Endothelial cell of umbilical vein (primary cell): ENCODE measurements at regions of chr10 and their contacts with region 1.

Region 1: DNA sequence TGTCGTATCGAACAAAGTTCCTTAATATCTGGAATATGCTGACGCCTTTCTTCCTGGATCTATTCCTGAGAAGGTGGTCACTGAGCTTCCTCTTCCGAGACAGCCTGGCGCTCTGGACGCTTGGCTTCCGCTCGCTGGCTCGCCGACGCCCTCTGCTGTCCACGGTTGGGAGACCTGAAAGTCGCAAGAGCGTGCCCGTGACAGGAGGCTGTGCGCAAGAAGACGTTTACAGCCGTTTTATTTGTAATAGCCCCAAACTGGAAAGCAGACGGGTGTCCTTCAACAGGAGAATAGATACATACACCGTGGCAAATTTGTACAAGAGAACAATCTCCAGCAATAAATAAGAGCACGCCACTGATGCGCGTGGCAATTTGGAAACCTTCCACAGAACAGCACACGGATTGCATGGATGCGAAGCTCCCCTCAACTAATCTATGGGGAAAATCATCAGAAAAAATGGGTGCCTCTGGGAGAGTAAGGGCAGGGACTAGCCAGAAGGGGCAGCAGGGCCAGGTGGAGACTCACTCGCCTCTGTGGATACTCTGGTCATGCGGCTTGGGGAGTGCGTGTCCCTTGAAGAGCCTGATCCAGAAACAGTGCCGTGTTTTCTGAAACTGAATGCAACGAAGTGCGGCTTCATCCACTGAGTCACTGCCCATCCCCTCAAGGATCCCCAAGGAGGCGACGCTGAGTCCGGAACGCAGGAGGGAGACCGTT is 41.5 kb upstream of the BNIP3 start:
- DNase-seq: peak; percentile 79
- H3K4me3 ChIP-seq: peak overlapping the region in 1 of 3 experiments; percentile 3
- H3K27ac ChIP-seq: no peak overlapping the region
- H3K4me1 ChIP-seq: no peaks in the 10 kb centered on the region
- H3K27me3 ChIP-seq: peaks cover 2 to 6% of the 10 kb centered on the region in 2 experiments
- CTCF ChIP-seq: peak; percentile 87
- POLR2A ChIP-seq: no peak

Region 2: DNA sequence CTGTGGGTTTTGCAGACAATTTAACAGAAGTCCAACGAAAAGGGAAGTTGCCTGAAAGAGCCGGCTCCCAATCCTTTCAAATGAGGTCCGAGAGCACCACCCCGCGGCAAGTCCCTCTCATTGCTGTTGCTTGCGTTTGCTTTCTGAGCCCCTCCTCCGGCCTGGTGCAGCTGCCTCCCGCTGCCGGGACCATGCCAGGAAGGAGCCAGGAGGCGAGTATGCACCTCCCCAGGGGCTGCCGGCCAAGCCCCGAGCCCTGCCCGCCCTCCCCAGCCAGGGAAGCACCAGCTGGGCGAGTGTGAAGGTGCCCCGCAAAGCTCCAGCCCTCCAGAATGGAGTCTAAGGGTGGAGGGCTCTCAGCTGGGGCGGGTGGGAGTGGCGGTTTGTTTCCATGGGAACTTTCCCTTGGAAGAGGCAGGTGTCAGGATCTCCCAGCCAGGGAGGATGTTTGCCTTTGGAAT is 148.2 kb before region 1 on chr10:
- CTCF ChIA-PET with region 1: interaction called, 16 read pairs
- POLR2A ChIA-PET with region 1: no interaction called
- dilution Hi-C with region 1: no loop called
- intact Hi-C with region 1: no loop called
- DNase-seq: peak; percentile 74
- H3K4me3 ChIP-seq: no peak overlapping the region
- H3K27ac ChIP-seq: no peak overlapping the region
- H3K4me1 ChIP-seq: no peaks in the 10 kb centered on the region
- H3K27me3 ChIP-seq: no peaks in the 10 kb centered on the region
- CTCF ChIP-seq: peak; percentile 72 to 85
- POLR2A ChIP-seq: no peak

Region 3: DNA sequence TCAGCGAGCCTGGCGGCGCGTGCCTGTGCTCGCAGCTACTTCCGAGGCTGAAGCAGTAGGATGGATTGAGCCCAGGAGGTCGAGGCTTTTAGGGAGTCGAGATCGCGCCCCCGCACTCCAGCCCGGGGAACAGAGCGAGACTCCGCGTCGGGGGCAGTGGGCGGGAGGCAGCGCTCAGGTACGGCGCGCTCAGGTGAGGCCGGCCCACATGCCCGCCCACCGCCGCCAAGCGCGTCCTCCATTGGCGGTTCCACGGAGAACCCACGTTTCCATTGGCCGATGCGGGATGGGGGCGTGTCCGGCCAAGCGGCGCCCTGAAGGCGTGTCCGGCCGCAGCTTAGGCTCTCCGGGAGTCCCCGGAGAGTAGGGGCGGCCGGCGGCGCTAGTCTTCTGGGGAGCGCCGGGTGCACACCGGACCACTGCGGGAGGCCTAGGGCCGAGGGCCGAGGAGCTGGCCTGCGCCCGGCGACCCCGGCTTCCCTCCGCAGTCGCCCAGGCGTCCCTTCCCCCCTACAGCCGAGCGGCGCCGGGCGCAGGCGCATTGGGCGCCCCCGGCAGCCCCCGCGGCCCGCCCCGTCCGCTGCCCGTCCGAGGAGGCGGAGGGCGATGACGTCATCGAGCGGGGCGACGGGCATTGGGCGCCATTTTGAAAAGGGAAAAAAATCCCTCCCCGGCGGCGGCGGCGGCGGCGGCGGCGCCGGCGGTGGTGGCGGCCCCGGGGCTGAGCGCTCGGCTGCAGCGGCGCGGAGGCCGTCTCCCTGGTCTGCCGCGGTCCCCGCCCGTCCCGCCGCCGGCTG is 122.7 kb before region 1 on chr10 and contains the start of gene PPP2R2D:
- CTCF ChIA-PET with region 1: interaction called, 64 read pairs
- POLR2A ChIA-PET with region 1: no interaction called
- dilution Hi-C with region 1: no loop called
- intact Hi-C with region 1: loop called (anchors 1 kb)
- DNase-seq: peak; percentile 90
- H3K4me3 ChIP-seq: peak within 1 kb of the TSS; percentile 87 to 95 (median 93)
- H3K27ac ChIP-seq: peak within 1 kb of the TSS; percentile 72
- H3K4me1 ChIP-seq: peaks cover 23% of the 10 kb centered on the region
- H3K27me3 ChIP-seq: peaks cover 12 to 18% of the 10 kb centered on the region in 2 experiments
- CTCF ChIP-seq: no peak
- POLR2A ChIP-seq: peak; percentile 45
- total RNA-seq, gene PPP2R2D: 33.9 and 36.3 TPM in 2 replicates

Region 4: GRCh38 chr10:131943021-131943814 is 80.0 kb before region 1 on chr10:
- CTCF ChIA-PET with region 1: interaction called, 35 read pairs
- POLR2A ChIA-PET with region 1: no interaction called
- dilution Hi-C with region 1: no loop called
- intact Hi-C with region 1: loop called (anchors 1 kb)
- DNase-seq: no peak
- H3K4me3 ChIP-seq: no peak overlapping the region
- H3K27ac ChIP-seq: no peak overlapping the region
- H3K4me1 ChIP-seq: peaks cover 30% of the 10 kb centered on the region
- H3K27me3 ChIP-seq: no peaks in the 10 kb centered on the region
- CTCF ChIP-seq: peak; percentile 32 to 55
- POLR2A ChIP-seq: no peak

Region 5: GRCh38 chr10:131981429-131982184 is 41.6 kb before region 1 on chr10 and contains the start of gene BNIP3:
- CTCF ChIA-PET with region 1: interaction called, 49 read pairs
- POLR2A ChIA-PET with region 1: no interaction called
- dilution Hi-C with region 1: no loop called
- intact Hi-C with region 1: loop called (anchors 2 kb)
- DNase-seq: peak; percentile 97
- H3K4me3 ChIP-seq: peak within 1 kb of the TSS; percentile 88 to 98 (median 94)
- H3K27ac ChIP-seq: peak within 1 kb of the TSS; percentile 30
- H3K4me1 ChIP-seq: peaks cover 24% of the 10 kb centered on the region
- H3K27me3 ChIP-seq: no peaks in the 10 kb centered on the region
- CTCF ChIP-seq: peak in 1 of 2 donors; percentile 4
- POLR2A ChIP-seq: peak; percentile 81
- total RNA-seq, gene BNIP3: 40.1 and 51.4 TPM in 2 replicates

Region 6: GRCh38 chr10:132005147-132005546 is 18.1 kb before region 1 on chr10:
- CTCF ChIA-PET with region 1: interaction called, 51 read pairs
- POLR2A ChIA-PET with region 1: no interaction called
- dilution Hi-C with region 1: no loop called
- intact Hi-C with region 1: no loop called
- DNase-seq: no peak
- H3K4me3 ChIP-seq: no peak overlapping the region
- H3K27ac ChIP-seq: no peak overlapping the region
- H3K4me1 ChIP-seq: no peaks in the 10 kb centered on the region
- H3K27me3 ChIP-seq: peaks cover 5 to 7% of the 10 kb centered on the region in 2 experiments
- CTCF ChIP-seq: no peak
- POLR2A ChIP-seq: no peak

Region 7: GRCh38 chr10:132033632-132034031 is 10.4 kb after region 1 on chr10:
- CTCF ChIA-PET with region 1: interaction called, 13 read pairs
- POLR2A ChIA-PET with region 1: no interaction called
- dilution Hi-C with region 1: no loop called
- intact Hi-C with region 1: no loop called
- DNase-seq: no peak
- H3K4me3 ChIP-seq: no peak overlapping the region
- H3K27ac ChIP-seq: no peak overlapping the region
- H3K4me1 ChIP-seq: no peaks in the 10 kb centered on the region
- H3K27me3 ChIP-seq: peaks cover 24% of the 10 kb centered on the region in 2 experiments
- CTCF ChIP-seq: no peak
- POLR2A ChIP-seq: no peak

Region 8: GRCh38 chr10:132826524-132827422 is 803.5 kb after region 1 on chr10:
- CTCF ChIA-PET with region 1: no interaction called
- POLR2A ChIA-PET with region 1: no interaction called
- dilution Hi-C with region 1: no loop called
- intact Hi-C with region 1: no loop called
- DNase-seq: no peak
- H3K4me3 ChIP-seq: no peak overlapping the region
- H3K27ac ChIP-seq: no peak overlapping the region
- H3K4me1 ChIP-seq: no peaks in the 10 kb centered on the region
- H3K27me3 ChIP-seq: no peaks in the 10 kb centered on the region
- CTCF ChIP-seq: no peak
- POLR2A ChIP-seq: no peak